ENCODE measurements at regions of chr17 and their contacts with region 1.

Region 1: GRCh38 chr17:3827124-3827773 is 18.8 kb downstream of the NCBP3 start:
- DNase-seq: peak; percentile 65
- CTCF ChIP-seq: peak; percentile 68

Region 2: GRCh38 chr17:3732210-3732621 is 95.0 kb before region 1 on chr17:
- CTCF ChIA-PET with region 1: interaction called, 217 read pairs
- POLR2A ChIA-PET with region 1: no interaction called
- DNase-seq: peak; percentile 80
- CTCF ChIP-seq: peak; percentile 82

Region 3: GRCh38 chr17:3804503-3804931 is 22.7 kb before region 1 on chr17:
- CTCF ChIA-PET with region 1: interaction called, 18 read pairs
- POLR2A ChIA-PET with region 1: no interaction called
- DNase-seq: peak; percentile 78
- CTCF ChIP-seq: no peak

Region 4: DNA sequence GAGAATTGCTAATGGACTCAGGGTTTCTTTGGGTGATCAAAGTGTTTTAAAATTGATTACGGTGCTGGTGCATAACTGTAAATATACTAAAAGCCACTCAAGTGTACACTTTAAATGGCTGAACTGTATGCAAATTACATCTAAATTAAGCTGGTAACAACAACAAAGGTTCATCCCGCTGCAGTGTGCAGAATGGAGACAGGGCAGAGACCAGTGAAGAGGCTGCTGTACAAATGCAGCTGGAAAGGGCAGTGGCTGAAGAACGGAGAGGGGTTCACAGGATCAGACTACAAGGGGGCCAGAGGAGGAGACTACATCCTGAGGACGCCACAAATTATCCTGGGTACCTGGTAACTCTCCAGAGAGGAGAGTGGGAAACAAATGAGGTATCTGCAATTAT is 17.2 kb before region 1 on chr17:
- CTCF ChIA-PET with region 1: interaction called, 18 read pairs
- POLR2A ChIA-PET with region 1: no interaction called
- DNase-seq: no peak
- CTCF ChIP-seq: no peak

Region 5: GRCh38 chr17:3896108-3896967 is 69.1 kb after region 1 on chr17:
- CTCF ChIA-PET with region 1: no interaction called
- POLR2A ChIA-PET with region 1: no interaction called
- DNase-seq: no peak
- CTCF ChIP-seq: no peak

Region 6: DNA sequence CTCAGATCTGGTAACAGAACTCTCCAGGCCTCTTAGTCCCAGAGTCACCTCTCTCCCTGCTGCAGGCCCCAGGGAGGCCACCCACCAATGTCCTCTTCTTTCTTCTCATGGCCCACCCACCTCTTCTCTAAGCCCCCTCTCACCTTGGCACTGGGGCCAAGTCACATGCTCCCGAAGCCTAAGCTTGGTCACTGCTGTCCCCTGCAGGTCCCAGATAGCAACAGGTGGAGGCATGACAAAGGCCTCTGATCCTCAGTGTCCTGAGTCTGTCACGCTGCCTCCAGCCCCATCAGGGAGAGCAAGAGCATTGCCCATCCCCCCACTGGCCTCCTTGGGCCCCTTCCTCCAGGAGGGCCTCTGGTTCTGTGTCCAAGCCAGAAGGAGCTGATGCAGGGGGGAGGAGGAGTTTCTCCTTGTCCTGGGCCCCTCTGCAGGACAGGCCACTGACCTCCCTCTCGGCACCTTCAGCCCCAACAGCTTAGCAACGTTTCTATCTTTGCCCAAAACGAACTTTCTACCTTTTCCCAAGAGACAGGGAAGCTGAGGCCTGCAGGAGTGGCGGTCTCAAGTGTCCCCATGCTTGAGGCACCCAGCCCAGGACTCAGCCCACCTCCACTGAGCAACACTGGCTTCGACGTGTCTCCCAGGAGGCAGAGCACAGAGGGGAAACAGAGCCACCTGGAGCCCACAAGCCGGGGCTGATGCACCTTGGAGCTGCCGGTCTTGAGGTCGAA is 80.4 kb after region 1 on chr17:
- CTCF ChIA-PET with region 1: no interaction called
- POLR2A ChIA-PET with region 1: no interaction called
- DNase-seq: no peak
- CTCF ChIP-seq: peak; percentile 64

Measured in GM10248 (cell line).